ENCODE measurements at regions of chr7 and their contacts with region 1.

Region 1: GRCh38 chr7:36852017-36852416 is 127.7 kb upstream of the AOAH start:
- DNase-seq: no peak
- H3K4me3 Mint-ChIP-seq: no peak overlapping the region
- H3K27ac Mint-ChIP-seq: peak overlapping the region; percentile 78
- H3K4me1 Mint-ChIP-seq: peaks cover 13% of the 10 kb centered on the region
- H3K27me3 Mint-ChIP-seq: no peaks in the 10 kb centered on the region

Region 2: DNA sequence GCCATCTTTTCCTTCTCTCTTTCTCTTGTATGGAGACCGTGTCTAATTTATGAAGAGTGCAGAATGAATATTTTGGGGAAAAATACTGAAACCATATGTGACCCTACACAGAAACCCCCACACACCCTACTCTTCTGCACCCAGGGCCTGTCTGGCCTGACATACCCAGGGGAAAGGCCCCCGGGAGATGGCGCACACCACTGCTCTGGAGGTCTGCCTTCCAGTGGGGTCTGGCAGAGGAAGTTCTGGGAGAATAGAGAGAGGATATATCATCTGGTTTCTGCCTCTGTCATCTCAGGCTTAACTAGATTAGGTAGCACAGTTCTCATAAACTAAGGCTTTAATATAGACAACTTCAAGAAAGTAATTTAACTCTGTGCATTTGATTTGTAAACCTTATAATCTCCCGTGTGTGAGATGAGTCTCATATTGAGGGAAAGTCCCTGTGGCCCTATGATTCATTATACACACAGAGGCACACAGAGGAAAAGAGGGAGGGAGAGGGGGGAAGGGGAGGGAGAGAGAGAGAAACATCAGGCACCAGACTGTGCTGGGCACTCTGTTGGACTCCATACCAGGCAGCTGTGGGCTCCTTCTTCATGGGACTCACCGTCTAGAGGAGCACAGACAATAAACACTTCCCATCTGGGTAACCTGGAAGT is 251.0 kb before region 1 on chr7:
- intact Hi-C with region 1: loop called (anchors 5 kb)
- DNase-seq: no peak
- H3K4me3 Mint-ChIP-seq: no peak overlapping the region
- H3K27ac Mint-ChIP-seq: peak overlapping the region; percentile 70
- H3K4me1 Mint-ChIP-seq: peaks cover 69% of the 10 kb centered on the region
- H3K27me3 Mint-ChIP-seq: no peaks in the 10 kb centered on the region

Region 3: GRCh38 chr7:36863901-36864701 is 12.1 kb after region 1 on chr7:
- intact Hi-C with region 1: loop called (anchors 1 kb)
- DNase-seq: no peak
- H3K4me3 Mint-ChIP-seq: no peak overlapping the region
- H3K27ac Mint-ChIP-seq: no peak overlapping the region
- H3K4me1 Mint-ChIP-seq: peaks cover 30% of the 10 kb centered on the region
- H3K27me3 Mint-ChIP-seq: no peaks in the 10 kb centered on the region

Region 4: GRCh38 chr7:36958111-36958733 is 106.2 kb after region 1 on chr7:
- intact Hi-C with region 1: loop called (anchors 5 kb)
- DNase-seq: no peak
- H3K4me3 Mint-ChIP-seq: no peak overlapping the region
- H3K27ac Mint-ChIP-seq: no peak overlapping the region
- H3K4me1 Mint-ChIP-seq: peaks cover 28% of the 10 kb centered on the region
- H3K27me3 Mint-ChIP-seq: no peaks in the 10 kb centered on the region

Region 5: DNA sequence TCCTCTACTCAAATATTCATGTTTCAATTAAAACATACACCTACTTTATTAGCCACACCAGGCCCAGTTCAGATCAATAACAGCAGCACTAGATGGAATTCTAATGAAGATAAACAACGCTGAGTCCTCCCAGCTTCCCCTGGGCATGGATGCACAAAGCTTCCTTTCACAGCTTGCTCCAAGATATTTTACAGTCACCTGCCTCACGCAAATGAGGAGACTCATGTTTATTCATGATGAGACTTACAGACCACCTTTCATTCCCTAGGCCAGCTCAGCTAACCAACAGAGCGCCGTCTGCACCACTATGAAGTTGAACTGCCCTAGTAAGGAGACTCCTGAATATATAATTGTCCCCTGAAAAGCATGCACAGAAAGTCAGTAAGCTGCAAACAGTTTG is 155.3 kb after region 1 on chr7:
- intact Hi-C with region 1: no loop called
- DNase-seq: no peak
- H3K4me3 Mint-ChIP-seq: no peak overlapping the region
- H3K27ac Mint-ChIP-seq: no peak overlapping the region
- H3K4me1 Mint-ChIP-seq: no peaks in the 10 kb centered on the region
- H3K27me3 Mint-ChIP-seq: no peaks in the 10 kb centered on the region

Region 6: GRCh38 chr7:37181550-37181932 is 329.5 kb after region 1 on chr7:
- intact Hi-C with region 1: loop called (anchors 10 kb)
- DNase-seq: no peak
- H3K4me3 Mint-ChIP-seq: no peak overlapping the region
- H3K27ac Mint-ChIP-seq: no peak overlapping the region
- H3K4me1 Mint-ChIP-seq: peaks cover 16% of the 10 kb centered on the region
- H3K27me3 Mint-ChIP-seq: no peaks in the 10 kb centered on the region

Measured in activated T-helper 2 cell treated with anti-CD3 and anti-CD28 coated beads, Interferon-gamma antibody, Interleukin-2, Interleukin-4, amounts not matched to agents 10 μg/mL and 5 μg/mL and 100 μg/mL, durations not matched to agents 14 hours and 24 hours and 36 hours (primary cell).